IMR-90 (cell line): ENCODE measurements at regions of chr5 and their contacts with region 1.

Region 1: GRCh38 chr5:172006321-172007174 is at the start of gene FBXW11:
- DNase-seq: peak; percentile 97
- ATAC-seq: peak; percentile 91
- H3K4me3 ChIP-seq: peak within 1 kb of the TSS; percentile 77
- H3K27ac ChIP-seq: peak within 1 kb of the TSS; percentile 98
- H3K4me1 ChIP-seq: 0 out of 2 replicates have a peak, but pooled peaks cover 4% of the 10 kb centered on the region
- H3K27me3 ChIP-seq: no peaks in the 10 kb centered on the region
- CTCF ChIP-seq: no peak
- POLR2A ChIP-seq: peak; percentile 85
- RAD21 ChIP-seq: no peak
- total RNA-seq, gene FBXW11: 97.1 and 100 TPM in 2 replicates

Region 2: GRCh38 chr5:171984748-171985419 is 21.7 kb before region 1 on chr5:
- CTCF ChIA-PET with region 1: interaction called, 4 read pairs
- POLR2A ChIA-PET with region 1: no interaction called
- dilution Hi-C with region 1: no loop called
- in situ Hi-C with region 1: no loop called
- intact Hi-C with region 1: loop called (anchors 2 kb)
- DNase-seq: peak; percentile 98
- ATAC-seq: peak; percentile 95
- H3K4me3 ChIP-seq: no peak overlapping the region
- H3K27ac ChIP-seq: 0 out of 2 replicates have a peak overlapping the region, but pooled peaks have one; percentile 48
- H3K4me1 ChIP-seq: peaks cover 5% of the 10 kb centered on the region
- H3K27me3 ChIP-seq: no peaks in the 10 kb centered on the region
- CTCF ChIP-seq: no peak
- POLR2A ChIP-seq: no peak
- RAD21 ChIP-seq: no peak

Region 3: GRCh38 chr5:172188033-172188892 is 181.7 kb after region 1 on chr5 and contains the start of gene STK10:
- CTCF ChIA-PET with region 1: interaction called, 3 read pairs
- POLR2A ChIA-PET with region 1: no interaction called
- dilution Hi-C with region 1: no loop called
- in situ Hi-C with region 1: no loop called
- intact Hi-C with region 1: loop called (anchors 5 kb)
- DNase-seq: peak; percentile 87
- ATAC-seq: peak; percentile 90
- H3K4me3 ChIP-seq: peak within 1 kb of the TSS; percentile 98
- H3K27ac ChIP-seq: peak within 1 kb of the TSS; percentile 88
- H3K4me1 ChIP-seq: peaks cover 11% of the 10 kb centered on the region
- H3K27me3 ChIP-seq: no peaks in the 10 kb centered on the region
- CTCF ChIP-seq: peak; percentile 92
- POLR2A ChIP-seq: 0 out of 2 replicates have a peak, but pooled peaks have one; percentile 17
- RAD21 ChIP-seq: peak; percentile 96
- total RNA-seq, gene STK10: 15.4 and 16.4 TPM in 2 replicates